ENCODE measurements at regions of chr1 and their contacts with region 1.

Region 1: DNA sequence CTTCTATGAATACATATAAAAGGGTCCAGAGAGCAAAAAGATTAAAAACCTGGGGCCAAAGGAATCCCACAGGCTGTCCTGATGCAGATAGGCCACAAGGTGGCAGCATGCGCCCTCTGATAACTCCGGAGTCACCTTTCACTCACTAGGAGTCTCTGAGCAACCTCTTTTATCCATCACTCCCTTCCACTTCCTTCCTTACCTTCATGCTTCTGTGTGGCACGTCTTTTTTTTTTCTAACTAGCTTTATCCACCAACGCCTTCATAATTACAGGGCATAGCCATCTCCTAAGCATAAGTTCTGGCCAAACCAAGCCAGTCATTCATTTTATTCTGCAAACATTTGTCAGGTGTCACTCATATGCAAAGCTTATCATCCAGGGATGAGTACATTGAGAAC is 3.9 kb upstream of the PGLYRP4 start:
- DNase-seq: peak; percentile 52 to 73 (median 63)
- ATAC-seq: peak; percentile 63 to 88 (median 78)
- H3K4me3 ChIP-seq: no peak overlapping the region
- H3K27ac ChIP-seq: no peak overlapping the region
- H3K4me1 ChIP-seq: peaks cover 0 to 13% (median 0%) of the 10 kb centered on the region in 12 donors
- H3K27me3 ChIP-seq: peaks cover 0 to 38% (median 14%) of the 10 kb centered on the region in 9 donors
- CTCF ChIP-seq: peak; percentile 82 to 96 (median 92)
- POLR2A ChIP-seq: no peak

Region 2: DNA sequence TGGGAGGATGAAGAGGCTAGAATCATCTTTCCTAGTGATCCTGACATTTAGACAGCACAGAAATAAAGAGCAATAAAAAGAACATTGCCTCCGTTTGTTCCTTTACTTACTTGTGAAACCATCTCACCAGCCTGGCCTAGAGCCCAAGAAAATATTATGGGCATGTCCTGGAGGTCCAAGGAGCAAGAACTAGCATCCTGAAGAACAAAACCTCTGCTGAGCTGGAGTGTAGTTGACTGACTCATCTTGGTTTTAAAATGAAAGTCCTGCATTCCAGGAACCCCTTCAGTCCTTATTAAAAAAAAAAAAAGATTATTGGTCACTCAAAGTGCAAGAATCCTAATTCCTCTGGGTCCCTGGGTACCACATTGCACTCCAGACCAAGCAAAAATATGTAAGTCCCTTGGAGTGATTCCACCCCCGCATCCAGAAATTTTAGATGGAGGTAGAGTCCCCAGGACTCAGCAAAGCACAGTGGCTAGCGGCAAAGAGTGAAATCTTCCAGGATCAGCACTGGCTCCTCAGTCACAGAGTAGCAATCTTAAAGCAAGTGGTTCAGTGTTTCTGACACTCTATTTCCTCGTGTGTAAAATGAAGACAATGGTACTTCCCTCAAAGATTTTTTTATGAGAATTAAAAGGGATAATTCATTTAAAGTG is 467.4 kb before region 1 on chr1:
- intact Hi-C with region 1: no loop called
- DNase-seq: no peak
- ATAC-seq: no peak
- H3K4me3 ChIP-seq: no peak overlapping the region
- H3K27ac ChIP-seq: no peak overlapping the region
- H3K4me1 ChIP-seq: no peaks in the 10 kb centered on the region
- H3K27me3 ChIP-seq: no peaks in the 10 kb centered on the region
- CTCF ChIP-seq: no peak
- POLR2A ChIP-seq: no peak

Region 3: DNA sequence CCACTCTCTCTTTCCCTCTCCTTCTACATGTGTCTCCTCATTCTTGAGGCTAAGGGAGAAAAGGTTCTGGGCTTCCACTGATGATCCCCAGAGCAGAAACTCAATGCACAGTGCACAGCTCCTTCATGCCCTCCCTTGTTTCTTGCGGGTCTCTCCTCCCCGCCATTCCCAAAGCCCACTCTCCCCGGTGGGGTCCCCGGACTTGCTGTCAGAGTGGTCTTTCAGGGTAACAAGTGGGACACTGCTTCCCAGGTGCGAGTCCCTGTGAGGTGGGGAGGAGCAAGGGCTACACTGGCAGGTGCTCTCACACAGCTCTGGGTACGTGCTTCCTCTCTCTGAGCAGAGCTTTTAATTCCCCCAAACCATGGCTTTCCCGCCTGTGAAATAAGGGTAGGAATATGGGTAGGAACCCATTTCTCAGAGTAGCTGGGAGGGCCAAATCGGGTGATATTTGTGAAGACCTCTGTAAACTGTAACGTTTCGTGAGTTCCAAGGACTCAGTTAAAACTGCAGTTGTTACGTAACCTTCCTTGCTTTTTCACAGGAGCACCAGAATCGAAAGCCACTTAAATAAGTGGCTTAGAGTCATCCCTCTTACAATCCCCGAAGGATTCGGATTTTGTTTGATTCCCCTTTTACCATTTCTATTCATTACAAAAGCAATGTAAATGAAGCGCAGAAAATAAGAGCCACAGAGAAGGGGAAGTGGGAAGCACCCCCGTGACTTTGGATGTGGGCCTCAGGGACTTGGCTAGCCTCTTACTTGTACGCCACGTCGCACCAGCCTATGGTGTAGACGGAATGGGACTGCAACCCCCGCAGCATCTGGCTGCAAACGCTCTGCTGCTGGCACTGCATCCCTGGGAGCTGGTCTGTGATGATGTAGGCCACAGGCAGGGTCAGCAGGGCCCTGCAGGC is 46.0 kb before region 1 on chr1:
- intact Hi-C with region 1: no loop called
- DNase-seq: no peak
- ATAC-seq: no peak
- H3K4me3 ChIP-seq: no peak overlapping the region
- H3K27ac ChIP-seq: no peak overlapping the region
- H3K4me1 ChIP-seq: no peaks in the 10 kb centered on the region
- H3K27me3 ChIP-seq: peaks cover 0 to 20% (median 0%) of the 10 kb centered on the region in 9 donors
- CTCF ChIP-seq: no peak
- POLR2A ChIP-seq: no peak

Region 4: DNA sequence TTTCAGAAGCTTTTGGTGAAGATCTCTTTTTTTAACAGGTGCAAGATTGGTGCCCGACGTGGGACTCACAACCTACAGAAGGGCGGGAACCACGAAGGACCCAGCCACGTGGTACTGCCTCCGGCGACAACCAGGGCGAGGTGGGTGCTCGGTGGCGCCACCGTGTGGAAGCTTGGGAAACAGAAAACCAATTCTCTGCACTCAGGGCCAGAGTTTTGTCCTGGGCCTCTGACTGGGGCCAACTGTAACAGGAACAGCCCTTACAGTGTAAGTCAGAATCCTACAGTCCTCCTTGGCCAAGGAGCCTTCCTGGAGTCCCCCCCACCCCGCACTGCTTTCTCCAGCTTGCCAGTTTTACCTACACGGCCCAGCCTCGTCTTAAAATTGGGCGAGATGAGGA is 52.2 kb after region 1 on chr1:
- intact Hi-C with region 1: loop called in 1 of 10 experiments (anchors 10 kb)
- DNase-seq: peak in 3 of 5 donors; percentile 52 to 76 (median 65)
- ATAC-seq: peak in 2 of 4 donors; percentile 54 to 63
- H3K4me3 ChIP-seq: no peak overlapping the region
- H3K27ac ChIP-seq: no peak overlapping the region
- H3K4me1 ChIP-seq: peaks cover 0 to 7% (median 0%) of the 10 kb centered on the region in 12 donors
- H3K27me3 ChIP-seq: peaks cover 0 to 26% (median 3%) of the 10 kb centered on the region in 9 donors
- CTCF ChIP-seq: peak in 10 of 12 donors; percentile 17 to 66 (median 35)
- POLR2A ChIP-seq: no peak

Measured in heart left ventricle (tissue), 16 donors.